ENCODE measurements at regions of chr20 and their contacts with region 1.

Region 1: GRCh38 chr20:23606652-23607049 is 934 bp upstream of the CST9 start:
- DNase-seq: peak; percentile 79 to 85
- H3K4me3 ChIP-seq: no peak overlapping the region
- H3K27ac ChIP-seq: no peak overlapping the region
- H3K4me1 ChIP-seq: no peaks in the 10 kb centered on the region
- H3K27me3 ChIP-seq: no peaks in the 10 kb centered on the region
- CTCF ChIP-seq: peak; percentile 75 to 91 (median 86)
- POLR2A ChIP-seq: no peak

Region 2: DNA sequence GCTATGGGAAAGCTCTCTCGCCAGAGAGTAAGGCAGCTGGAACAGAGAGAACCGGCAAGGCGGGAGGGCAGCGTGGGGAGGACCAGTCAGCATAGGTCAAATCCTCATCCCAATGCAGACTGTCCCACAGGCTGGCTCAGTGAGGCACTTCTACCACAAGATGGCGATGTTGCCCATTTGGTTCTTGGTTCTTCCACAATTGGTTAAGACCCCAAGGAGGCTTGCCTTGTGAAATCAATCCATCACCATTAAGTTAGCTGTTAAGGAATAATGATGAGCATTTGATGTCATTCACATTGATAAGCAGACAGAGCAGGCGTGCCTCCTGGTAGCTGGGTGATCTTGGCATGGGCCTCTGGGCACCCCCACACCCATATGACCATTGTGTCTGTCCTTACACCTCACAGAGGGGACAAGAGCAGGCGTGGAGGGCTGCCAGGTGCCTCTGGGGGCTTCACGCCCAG is 164.8 kb before region 1 on chr20:
- intact Hi-C with region 1: loop called (anchors 10 kb)
- DNase-seq: peak; percentile 56 to 58
- H3K4me3 ChIP-seq: no peak overlapping the region
- H3K27ac ChIP-seq: no peak overlapping the region
- H3K4me1 ChIP-seq: no peaks in the 10 kb centered on the region
- H3K27me3 ChIP-seq: no peaks in the 10 kb centered on the region
- CTCF ChIP-seq: peak; percentile 62 to 70 (median 68)
- POLR2A ChIP-seq: no peak

Region 3: DNA sequence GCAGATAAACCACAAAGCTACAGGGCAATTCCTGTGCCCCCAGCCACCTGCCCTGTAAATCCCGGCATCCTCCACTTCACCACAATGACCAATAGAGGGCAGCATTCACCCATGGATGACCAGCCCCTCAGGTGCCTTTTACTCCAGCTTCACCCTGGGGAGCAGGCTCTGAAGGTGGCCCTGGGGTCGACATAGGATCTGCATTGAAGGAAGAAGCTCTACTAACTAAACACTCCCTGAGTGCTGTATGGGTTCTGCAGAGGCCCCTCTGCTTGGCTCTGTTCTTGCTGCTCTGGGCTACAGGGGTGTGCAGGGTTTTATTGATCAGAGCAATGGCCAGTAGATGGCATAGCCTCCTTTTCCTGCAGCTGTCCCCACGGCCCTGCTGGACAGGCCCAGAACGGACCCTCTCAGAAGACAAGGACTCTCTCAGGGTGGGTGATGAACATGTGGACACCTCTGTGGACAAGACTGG is 61.9 kb after region 1 on chr20:
- intact Hi-C with region 1: no loop called
- DNase-seq: peak; percentile 33 to 40
- H3K4me3 ChIP-seq: no peak overlapping the region
- H3K27ac ChIP-seq: no peak overlapping the region
- H3K4me1 ChIP-seq: no peaks in the 10 kb centered on the region
- H3K27me3 ChIP-seq: no peaks in the 10 kb centered on the region
- CTCF ChIP-seq: peak; percentile 60 to 75 (median 64)
- POLR2A ChIP-seq: no peak